ENCODE measurements at regions of chr4 and their contacts with region 1.

Region 1: DNA sequence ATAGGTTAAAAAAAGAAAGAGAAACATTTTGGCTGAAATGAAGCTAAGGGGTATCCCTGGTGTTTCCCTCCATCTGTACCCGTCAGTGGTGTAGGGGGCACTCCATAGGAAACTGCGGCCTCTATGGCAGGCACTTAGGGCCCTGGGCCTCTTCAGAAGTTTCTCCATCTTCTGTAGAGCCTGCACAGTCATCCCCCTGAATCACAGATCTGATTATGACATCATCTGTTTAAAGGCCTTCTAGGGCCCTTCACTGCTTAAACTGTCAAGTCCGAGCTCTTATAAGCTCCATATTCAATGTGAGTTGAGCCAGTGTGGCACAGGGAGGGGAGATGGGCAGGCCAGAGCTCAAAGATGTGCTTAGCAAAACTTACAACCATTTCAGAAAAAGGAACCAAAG is 241.3 kb downstream of the NR3C2 start:
- DNase-seq: no peak
- H3K4me3 ChIP-seq: no peak overlapping the region
- H3K27ac ChIP-seq: no peak overlapping the region
- H3K4me1 ChIP-seq: peaks cover 7 to 30% (median 9%) of the 10 kb centered on the region in 4 donors
- H3K27me3 ChIP-seq: no peaks in the 10 kb centered on the region
- CTCF ChIP-seq: no peak
- EP300 ChIP-seq: no peak
- POLR2A ChIP-seq: no peak

Region 2: GRCh38 chr4:147793569-147794313 is 407.2 kb before region 1 on chr4:
- in situ Hi-C with region 1: no loop called
- intact Hi-C with region 1: no loop called
- DNase-seq: no peak
- H3K4me3 ChIP-seq: no peak overlapping the region
- H3K27ac ChIP-seq: no peak overlapping the region
- H3K4me1 ChIP-seq: peaks cover 0 to 25% (median 10%) of the 10 kb centered on the region in 4 donors
- H3K27me3 ChIP-seq: no peaks in the 10 kb centered on the region
- CTCF ChIP-seq: no peak
- EP300 ChIP-seq: no peak
- POLR2A ChIP-seq: no peak

Region 3: DNA sequence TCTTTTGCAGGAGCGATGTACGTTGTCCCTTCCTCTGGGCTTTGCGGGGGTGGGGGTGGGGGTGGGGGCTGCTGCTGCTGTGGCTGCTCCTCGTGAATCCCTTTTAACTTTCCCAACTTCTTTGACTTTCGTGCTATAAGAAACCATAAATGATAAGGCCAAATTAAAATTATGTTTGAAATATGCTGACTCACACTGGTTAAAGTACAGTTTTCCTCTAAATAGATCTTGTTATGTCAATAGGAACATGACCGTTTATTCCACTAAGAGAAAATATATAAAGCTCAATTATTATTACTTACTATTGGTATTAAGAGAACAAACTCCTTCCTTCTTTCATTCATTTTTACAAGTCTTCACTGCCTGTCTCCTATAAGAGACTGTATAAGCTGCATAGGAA is 46.2 kb before region 1 on chr4:
- in situ Hi-C with region 1: no loop called
- intact Hi-C with region 1: loop called (anchors 1 kb)
- DNase-seq: no peak
- H3K4me3 ChIP-seq: no peak overlapping the region
- H3K27ac ChIP-seq: no peak overlapping the region
- H3K4me1 ChIP-seq: peaks cover 0 to 14% (median 3%) of the 10 kb centered on the region in 4 donors
- H3K27me3 ChIP-seq: no peaks in the 10 kb centered on the region
- CTCF ChIP-seq: no peak
- EP300 ChIP-seq: no peak
- POLR2A ChIP-seq: no peak

Region 4: GRCh38 chr4:148574502-148574901 is 373.5 kb after region 1 on chr4:
- in situ Hi-C with region 1: no loop called
- intact Hi-C with region 1: no loop called
- DNase-seq: no peak
- H3K4me3 ChIP-seq: no peak overlapping the region
- H3K27ac ChIP-seq: no peak overlapping the region
- H3K4me1 ChIP-seq: no peaks in the 10 kb centered on the region
- H3K27me3 ChIP-seq: no peaks in the 10 kb centered on the region
- CTCF ChIP-seq: no peak
- EP300 ChIP-seq: no peak
- POLR2A ChIP-seq: no peak

Measured in transverse colon (tissue), 4 donors.